SK-N-SH (cell line): ENCODE measurements at regions of chr3 and their contacts with region 1.

Region 1: DNA sequence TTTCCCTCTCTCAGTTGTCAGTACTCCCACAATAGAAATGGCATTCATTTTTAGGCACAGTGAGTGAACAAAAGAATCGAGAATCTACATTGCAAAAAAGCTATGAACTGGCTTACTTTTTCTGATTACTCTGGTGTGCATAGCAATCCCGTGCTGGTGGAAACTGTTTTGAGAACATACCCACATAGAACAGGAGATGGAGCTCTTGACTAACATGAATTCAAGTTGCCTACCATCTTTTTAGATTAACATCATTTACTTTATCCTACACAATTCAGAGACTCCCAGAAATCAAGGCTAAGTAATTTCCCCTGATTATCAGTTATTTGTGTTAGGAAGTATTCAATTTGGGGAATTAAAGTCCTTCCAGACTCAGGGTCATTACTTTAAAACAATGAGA is 326.6 kb downstream of the ARPP21 start:
- DNase-seq: peak; percentile 46
- H3K4me3 ChIP-seq: peak overlapping the region in 1 of 2 experiments; percentile 12; a peak in 1 of 4 replicates
- H3K27ac ChIP-seq: peak overlapping the region in 1 of 2 experiments; percentile 9; a peak in 2 of 4 replicates
- H3K4me1 ChIP-seq: peaks cover 8 to 13% of the 10 kb centered on the region in 2 experiments; a peak in 3 of 4 replicates
- H3K27me3 ChIP-seq: no peaks in the 10 kb centered on the region
- CTCF ChIP-seq: peak; percentile 78
- EP300 ChIP-seq: no peak
- RAD21 ChIP-seq: peak; percentile 96

Region 2: DNA sequence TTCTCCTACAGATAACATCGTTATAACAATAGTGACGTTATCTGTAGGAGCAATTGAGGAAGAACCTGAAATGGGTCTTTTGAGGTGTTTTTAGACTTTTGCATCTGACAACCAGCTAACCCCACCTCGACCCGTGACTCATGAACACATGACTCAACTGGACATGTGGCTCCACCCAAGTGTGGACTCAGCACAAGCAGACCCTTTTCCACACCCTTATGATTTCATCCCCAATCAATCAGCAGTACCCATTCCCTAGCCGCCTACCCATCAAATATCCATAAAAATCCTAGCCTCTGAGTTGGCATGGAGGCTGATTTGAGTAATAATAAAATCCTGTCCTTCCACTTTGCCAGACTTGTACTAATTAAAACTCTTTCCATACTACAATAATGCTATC is 71.2 kb before region 1 on chr3:
- CTCF ChIA-PET with region 1: no interaction called
- POLR2A ChIA-PET with region 1: no interaction called
- DNase-seq: no peak
- H3K4me3 ChIP-seq: no peak overlapping the region
- H3K27ac ChIP-seq: no peak overlapping the region
- H3K4me1 ChIP-seq: no peaks in the 10 kb centered on the region; a peak in 1 of 4 replicates
- H3K27me3 ChIP-seq: no peaks in the 10 kb centered on the region
- CTCF ChIP-seq: no peak
- EP300 ChIP-seq: no peak
- RAD21 ChIP-seq: no peak

Region 3: GRCh38 chr3:35932995-35933394 is 32.9 kb before region 1 on chr3:
- CTCF ChIA-PET with region 1: no interaction called
- POLR2A ChIA-PET with region 1: no interaction called
- DNase-seq: no peak
- H3K4me3 ChIP-seq: no peak overlapping the region
- H3K27ac ChIP-seq: peak overlapping the region; percentile 75 to 84
- H3K4me1 ChIP-seq: peaks cover 7 to 34% of the 10 kb centered on the region in 2 experiments
- H3K27me3 ChIP-seq: no peaks in the 10 kb centered on the region
- CTCF ChIP-seq: no peak
- EP300 ChIP-seq: peak; percentile 31 to 96; a peak in 2 of 4 replicates
- RAD21 ChIP-seq: peak; percentile 1; the same call in 1 of the 2 replicates

Region 4: DNA sequence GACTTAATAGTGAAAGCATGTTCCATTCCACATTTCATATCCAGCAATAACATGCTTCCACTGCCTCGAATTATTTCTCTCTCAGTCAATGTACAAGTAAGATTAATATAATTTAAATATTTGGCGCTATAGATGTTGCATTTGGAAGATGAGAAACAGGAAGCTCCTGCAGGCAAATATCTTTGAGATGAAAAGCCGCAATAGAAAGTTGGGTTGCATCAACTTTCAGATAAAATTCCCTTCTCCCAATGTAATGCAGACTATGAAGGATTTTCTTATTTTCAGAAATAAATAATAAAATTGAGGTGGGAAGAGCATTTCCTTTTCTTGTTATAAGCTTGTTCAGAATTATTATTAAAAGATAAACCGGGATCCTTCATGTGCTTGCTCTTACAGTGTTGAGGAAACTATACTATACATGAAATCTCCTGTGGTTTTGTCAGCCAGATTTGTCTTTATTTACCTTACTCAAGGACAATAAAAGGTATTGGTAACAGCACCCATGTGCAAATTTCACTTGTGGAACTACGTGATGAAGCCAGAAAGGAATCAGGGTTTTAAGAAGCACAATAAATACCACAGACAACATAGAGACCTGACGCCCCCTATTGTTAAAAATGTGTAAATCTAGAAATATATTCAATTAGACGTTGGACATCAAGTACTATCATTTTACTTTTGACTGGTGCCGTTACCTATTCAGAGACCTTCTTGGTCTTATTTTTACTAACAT is 19.6 kb before region 1 on chr3:
- CTCF ChIA-PET with region 1: interaction called, 27 read pairs
- POLR2A ChIA-PET with region 1: no interaction called
- DNase-seq: no peak
- H3K4me3 ChIP-seq: no peak overlapping the region
- H3K27ac ChIP-seq: peak overlapping the region; percentile 76 to 82
- H3K4me1 ChIP-seq: peaks cover 8 to 35% of the 10 kb centered on the region in 2 experiments; a peak in 3 of 4 replicates
- H3K27me3 ChIP-seq: no peaks in the 10 kb centered on the region
- CTCF ChIP-seq: peak; percentile 67
- EP300 ChIP-seq: no peak
- RAD21 ChIP-seq: peak; percentile 61

Region 5: DNA sequence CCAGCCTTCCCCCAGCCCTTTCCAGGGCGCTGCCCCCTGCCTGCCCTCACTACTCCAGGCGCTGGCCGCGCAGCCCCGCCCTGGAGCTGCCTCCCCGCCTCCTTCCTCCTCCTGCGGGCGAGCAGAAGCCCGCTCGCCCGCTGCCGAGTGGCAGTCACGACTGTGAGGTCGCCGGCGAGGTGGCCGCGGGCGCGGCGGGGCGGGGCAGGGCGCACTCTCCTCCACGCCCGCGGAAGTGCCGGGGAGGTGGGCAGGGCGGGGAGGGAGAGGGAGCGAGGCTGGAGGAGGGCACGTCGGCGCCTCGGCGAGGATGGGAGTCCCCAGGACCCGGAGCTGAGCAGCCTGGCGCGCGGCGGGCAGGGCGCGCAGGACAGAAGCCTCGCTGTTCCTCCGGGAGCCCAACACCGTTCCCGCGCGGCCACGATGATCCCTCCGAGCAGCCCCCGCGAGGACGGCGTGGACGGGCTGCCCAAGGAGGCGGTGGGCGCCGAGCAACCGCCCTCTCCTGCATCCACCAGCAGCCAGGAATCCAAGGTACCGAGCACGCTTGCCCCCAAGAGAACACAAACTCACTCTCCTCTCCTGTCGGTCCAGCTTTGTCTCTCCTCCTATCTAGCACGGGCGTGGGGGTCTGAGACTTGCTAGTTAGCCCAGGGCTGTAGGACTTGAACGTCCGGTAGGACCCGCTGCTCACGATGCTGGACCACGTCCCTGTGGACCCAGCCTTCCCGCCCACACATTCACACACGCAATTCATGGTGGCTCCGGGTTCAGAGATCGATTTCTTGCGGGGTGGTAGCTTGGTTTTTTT is 414.5 kb after region 1 on chr3 and contains the start of gene STAC:
- CTCF ChIA-PET with region 1: interaction called, 13 read pairs
- POLR2A ChIA-PET with region 1: no interaction called
- DNase-seq: peak; percentile 88
- H3K4me3 ChIP-seq: peak within 1 kb of the TSS; percentile 88 to 97
- H3K27ac ChIP-seq: peak within 1 kb of the TSS; percentile 53 to 93
- H3K4me1 ChIP-seq: peaks cover 5 to 22% of the 10 kb centered on the region in 2 experiments; a peak in 2 of 4 replicates
- H3K27me3 ChIP-seq: no peaks in the 10 kb centered on the region
- CTCF ChIP-seq: no peak
- EP300 ChIP-seq: peak; percentile 16 to 20; a peak in 2 of 4 replicates
- RAD21 ChIP-seq: peak; percentile 22
- polyA plus RNA-seq, gene STAC: 25.0 and 31.6 TPM in 2 replicates

Region 6: GRCh38 chr3:36700537-36701248 is 734.8 kb after region 1 on chr3:
- CTCF ChIA-PET with region 1: interaction called, 76 read pairs
- POLR2A ChIA-PET with region 1: no interaction called
- DNase-seq: peak; percentile 73
- H3K4me3 ChIP-seq: peak overlapping the region in 1 of 2 experiments; percentile 25; a peak in 1 of 4 replicates
- H3K27ac ChIP-seq: peak overlapping the region in 1 of 2 experiments; percentile 55; a peak in 1 of 4 replicates
- H3K4me1 ChIP-seq: peaks cover 0 to 21% of the 10 kb centered on the region in 2 experiments; a peak in 3 of 4 replicates
- H3K27me3 ChIP-seq: no peaks in the 10 kb centered on the region
- CTCF ChIP-seq: peak; percentile 97
- EP300 ChIP-seq: no peak; a peak in 1 of 4 replicates
- RAD21 ChIP-seq: peak; percentile 100

Region 7: DNA sequence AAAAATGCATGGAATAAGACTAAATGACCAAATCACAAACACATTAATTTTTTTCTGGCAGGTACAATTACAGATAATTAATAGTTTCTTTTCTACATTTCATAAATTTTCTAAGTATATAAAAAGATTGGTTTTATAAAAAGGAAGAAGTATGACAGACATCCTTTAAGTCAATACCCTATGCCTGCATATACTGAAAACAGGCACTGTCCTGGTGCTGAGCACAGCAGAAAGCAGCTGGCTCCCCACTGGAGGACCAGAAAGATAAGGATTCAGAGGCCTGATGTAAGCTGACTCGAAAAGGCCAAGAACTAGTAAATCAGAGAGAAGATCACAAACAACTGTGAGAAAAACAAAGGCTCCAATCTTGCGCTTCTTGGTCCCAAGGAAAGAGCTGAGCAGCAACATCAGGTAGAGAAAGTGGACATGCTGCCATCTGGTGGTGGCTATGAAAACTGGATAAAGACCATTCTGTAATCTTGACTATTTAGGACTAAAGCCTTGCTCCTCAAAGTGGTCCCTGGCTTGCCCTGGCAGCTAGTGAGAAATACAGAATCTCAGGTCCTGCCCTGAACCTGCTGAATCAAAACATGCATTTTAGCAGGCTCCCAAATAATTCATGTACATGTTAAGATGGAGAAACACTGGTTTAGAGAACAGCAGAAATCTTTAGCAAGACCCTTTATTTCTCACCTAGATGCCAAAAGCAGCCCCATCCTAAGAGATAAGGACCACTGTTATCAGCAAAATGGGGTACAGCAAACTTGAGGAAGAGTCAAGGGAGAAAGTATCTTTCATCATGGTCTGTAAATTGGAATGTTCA is 902.9 kb after region 1 on chr3:
- CTCF ChIA-PET with region 1: interaction called, 10 read pairs
- POLR2A ChIA-PET with region 1: no interaction called
- DNase-seq: peak; percentile 56
- H3K4me3 ChIP-seq: peak overlapping the region in 1 of 2 experiments; percentile 43; a peak in 1 of 4 replicates
- H3K27ac ChIP-seq: no peak overlapping the region
- H3K4me1 ChIP-seq: peaks cover 0 to 9% of the 10 kb centered on the region in 2 experiments; a peak in 2 of 4 replicates
- H3K27me3 ChIP-seq: peaks cover 4% of the 10 kb centered on the region; the same call in 1 of the 2 replicates
- CTCF ChIP-seq: peak; percentile 83
- EP300 ChIP-seq: no peak
- RAD21 ChIP-seq: peak; percentile 89